Testis (tissue), 5 donors: ENCODE measurements at regions of chr13 and their contacts with region 1.

Region 1: GRCh38 chr13:95191821-95192563 is 109.3 kb downstream of the ABCC4 start:
- DNase-seq: peak; percentile 90
- H3K4me3 ChIP-seq: no peak overlapping the region
- H3K27ac ChIP-seq: no peak overlapping the region
- H3K4me1 ChIP-seq: no peaks in the 10 kb centered on the region
- H3K27me3 ChIP-seq: no peaks in the 10 kb centered on the region
- CTCF ChIP-seq: peak; percentile 60 to 86 (median 72)
- POLR2A ChIP-seq: no peak

Region 2: DNA sequence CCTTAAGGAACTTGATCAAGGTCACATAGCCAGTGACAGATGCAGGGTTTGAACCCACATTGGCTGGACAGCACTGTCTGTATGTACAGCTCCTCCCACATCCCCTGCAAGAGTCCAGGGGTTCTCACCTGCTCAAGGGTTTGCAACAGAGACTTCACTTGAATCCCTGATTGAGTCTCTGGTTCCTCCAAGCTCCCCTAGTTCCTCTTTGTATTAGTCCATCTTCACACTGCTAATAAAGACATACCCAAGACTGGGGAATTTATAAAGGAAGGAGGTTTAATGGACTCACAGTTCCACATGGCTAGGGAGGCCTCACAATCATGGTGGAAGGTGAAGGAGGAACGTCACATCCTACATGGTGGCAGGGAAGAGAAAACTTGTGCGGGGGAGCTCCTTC is 287.7 kb after region 1 on chr13:
- intact Hi-C with region 1: loop called (anchors 10 kb)
- DNase-seq: no peak
- H3K4me3 ChIP-seq: no peak overlapping the region
- H3K27ac ChIP-seq: no peak overlapping the region
- H3K4me1 ChIP-seq: no peaks in the 10 kb centered on the region
- H3K27me3 ChIP-seq: no peaks in the 10 kb centered on the region
- CTCF ChIP-seq: no peak
- POLR2A ChIP-seq: no peak